Activated T-helper 2 cell treated with anti-CD3 and anti-CD28 coated beads, Interferon-gamma antibody, Interleukin-2, Interleukin-4, amounts not matched to agents 10 μg/mL and 5 μg/mL and 100 μg/mL, durations not matched to agents 14 hours and 24 hours and 36 hours (primary cell): ENCODE measurements at regions of chr10 and their contacts with region 1.

Region 1: GRCh38 chr10:123154092-123154921 is at the start of gene BUB3:
- DNase-seq: peak; percentile 96
- H3K4me3 Mint-ChIP-seq: peak within 1 kb of the TSS; percentile 99
- H3K27ac Mint-ChIP-seq: peak within 1 kb of the TSS; percentile 100
- H3K4me1 Mint-ChIP-seq: peaks cover 54% of the 10 kb centered on the region
- H3K27me3 Mint-ChIP-seq: peaks cover 22% of the 10 kb centered on the region
- total RNA-seq, gene BUB3: 194 and 210 TPM in 2 replicates

Region 2: GRCh38 chr10:122879339-122880273 is 274.7 kb before region 1 on chr10 and contains the start of gene FAM24B:
- intact Hi-C with region 1: loop called (anchors 1 kb)
- DNase-seq: peak; percentile 93
- H3K4me3 Mint-ChIP-seq: peak within 1 kb of the TSS; percentile 90
- H3K27ac Mint-ChIP-seq: peak within 1 kb of the TSS; percentile 90
- H3K4me1 Mint-ChIP-seq: peaks cover 47% of the 10 kb centered on the region
- H3K27me3 Mint-ChIP-seq: no peaks in the 10 kb centered on the region
- total RNA-seq, gene FAM24B: 15.6 and 16.0 TPM in 2 replicates

Region 3: DNA sequence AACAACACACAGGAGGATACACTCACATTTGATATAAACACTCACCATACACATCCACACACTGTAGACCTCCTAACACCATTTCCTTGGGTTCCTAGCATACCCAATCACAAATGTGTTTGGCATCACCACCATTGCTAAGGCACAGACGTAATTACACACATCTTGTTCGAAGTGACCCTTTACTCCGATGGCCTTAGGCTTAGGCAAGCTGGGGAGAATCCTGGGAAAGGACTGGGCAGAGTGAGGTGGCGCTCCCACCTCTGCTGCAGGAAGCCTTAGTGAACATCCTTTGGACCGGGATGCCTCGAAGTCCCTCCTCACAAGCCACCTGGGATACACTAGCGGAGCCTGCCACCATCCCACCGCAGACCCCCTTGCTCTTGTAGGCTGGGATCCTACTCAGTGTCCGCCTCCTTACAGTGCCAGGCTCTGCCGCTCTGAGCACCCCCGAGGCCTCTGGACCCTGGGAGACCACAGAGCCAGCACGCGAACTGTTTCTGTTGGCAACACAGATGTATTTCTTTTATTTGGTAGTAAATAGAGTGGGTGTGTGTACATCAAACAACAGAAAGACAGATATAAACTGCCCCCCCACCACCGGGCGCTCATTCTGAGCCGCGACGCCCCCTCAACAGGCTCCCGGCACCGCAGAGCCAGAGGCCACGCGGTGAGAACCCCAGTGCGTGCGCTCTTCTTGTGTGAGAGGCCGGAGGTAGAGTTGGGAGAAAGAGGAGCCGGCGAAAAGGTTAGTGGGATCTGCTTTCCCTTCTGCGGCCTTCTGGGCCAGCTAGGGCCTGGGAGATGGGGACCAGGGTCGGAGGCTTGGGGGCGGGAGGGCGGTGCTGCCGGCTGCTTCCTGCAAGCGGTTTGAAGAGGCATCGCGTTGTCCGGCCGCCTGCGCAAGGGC is 12.3 kb before region 1 on chr10:
- intact Hi-C with region 1: no loop called
- DNase-seq: no peak
- H3K4me3 Mint-ChIP-seq: no peak overlapping the region
- H3K27ac Mint-ChIP-seq: no peak overlapping the region
- H3K4me1 Mint-ChIP-seq: peaks cover 14% of the 10 kb centered on the region
- H3K27me3 Mint-ChIP-seq: peaks cover 86% of the 10 kb centered on the region

Region 4: GRCh38 chr10:123287594-123288247 is 133.4 kb after region 1 on chr10:
- intact Hi-C with region 1: loop called (anchors 5 kb)
- DNase-seq: peak; percentile 9
- H3K4me3 Mint-ChIP-seq: no peak overlapping the region
- H3K27ac Mint-ChIP-seq: no peak overlapping the region
- H3K4me1 Mint-ChIP-seq: peaks cover 15% of the 10 kb centered on the region
- H3K27me3 Mint-ChIP-seq: peaks cover 11% of the 10 kb centered on the region

Region 5: DNA sequence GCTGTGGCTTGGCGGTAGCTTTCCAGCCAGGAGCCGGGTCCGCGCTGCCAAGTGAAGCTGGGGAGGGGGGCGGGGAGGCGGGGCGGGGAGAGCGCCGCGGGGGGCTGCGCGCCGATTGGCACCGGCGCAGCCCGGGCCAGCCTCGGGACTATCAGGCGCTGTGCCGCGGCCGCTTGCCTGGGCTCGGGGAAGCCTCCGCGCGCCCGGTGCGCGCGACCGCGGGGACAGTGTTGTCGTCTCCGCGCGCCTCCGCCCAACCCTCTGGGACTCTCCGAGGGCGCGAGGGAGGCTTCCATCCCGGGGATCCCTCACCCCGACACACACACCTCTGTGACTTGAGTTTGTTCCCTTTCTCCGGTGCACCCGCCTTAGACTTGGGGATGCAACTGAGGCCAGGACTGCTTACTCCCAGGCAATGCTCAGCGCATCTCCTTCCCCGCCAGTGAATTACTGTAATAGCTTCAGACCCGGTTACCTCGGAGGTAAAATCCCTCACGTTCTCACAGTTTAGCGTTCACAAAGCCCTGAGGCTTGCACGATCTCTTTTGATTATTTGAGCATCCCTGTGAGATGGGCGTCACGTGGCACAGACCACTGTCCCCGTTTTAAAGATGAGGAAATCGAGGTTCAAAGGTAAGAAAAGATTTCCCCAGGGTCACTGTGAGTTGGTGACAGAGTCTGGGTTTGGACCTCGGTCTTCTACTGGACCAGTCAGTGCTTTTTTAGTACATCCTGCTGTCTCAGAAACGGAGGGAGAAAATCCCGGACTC is 1295.9 kb after region 1 on chr10 and contains the start of gene NKX1-2:
- intact Hi-C with region 1: loop called (anchors 5 kb)
- DNase-seq: no peak
- H3K4me3 Mint-ChIP-seq: peak within 1 kb of the TSS; percentile 8
- H3K27ac Mint-ChIP-seq: no peak within 1 kb of the TSS
- H3K4me1 Mint-ChIP-seq: peaks cover 12% of the 10 kb centered on the region
- H3K27me3 Mint-ChIP-seq: peaks cover 81% of the 10 kb centered on the region
- total RNA-seq, gene NKX1-2: not detected in 2 replicates